AG04449 (cell line): ENCODE measurements at regions of chr17 and their contacts with region 1.

Region 1: DNA sequence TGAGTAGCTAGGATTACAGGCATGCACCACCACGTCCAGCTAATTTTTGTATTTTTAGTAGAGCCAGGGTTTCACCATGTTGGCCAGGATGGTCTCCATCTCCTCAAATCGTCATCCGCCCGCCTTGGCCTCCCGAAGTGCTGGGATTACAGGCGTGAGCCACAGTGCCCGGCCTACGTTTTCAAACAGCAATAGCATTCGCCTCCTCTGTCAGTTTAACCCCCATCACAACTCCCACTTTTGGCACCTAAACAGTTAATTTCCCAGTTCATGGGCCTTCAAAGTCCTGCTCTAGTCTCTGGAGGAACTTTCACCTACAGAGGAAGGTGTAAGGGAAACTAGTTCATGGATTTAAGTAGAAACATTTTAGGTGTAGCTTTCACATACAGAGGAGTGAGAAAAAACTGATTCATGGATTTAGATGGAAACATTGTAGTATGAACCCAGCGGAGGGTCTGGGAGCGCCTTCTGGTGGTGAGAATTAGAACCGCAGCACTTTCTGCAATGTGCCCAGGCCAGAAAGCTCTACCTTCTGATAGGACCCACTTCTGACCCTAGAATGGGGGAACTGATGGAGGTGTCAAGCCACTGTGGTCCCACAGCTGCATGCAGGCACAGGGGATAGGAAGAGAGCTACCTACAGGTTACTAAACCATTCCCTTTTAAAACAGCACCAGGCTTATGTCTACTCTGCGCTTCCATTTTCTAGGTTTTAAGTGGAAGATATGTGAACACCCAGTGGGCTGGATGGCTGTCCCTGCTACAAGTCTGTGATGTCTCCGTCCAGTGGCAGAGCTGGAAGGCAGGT is 12.0 kb upstream of the MEOX1 start:
- DNase-seq: no peak
- H3K4me3 ChIP-seq: no peak overlapping the region
- CTCF ChIP-seq: peak; percentile 85

Region 2: GRCh38 chr17:43530278-43531081 is 143.2 kb before region 1 on chr17:
- CTCF ChIA-PET with region 1: interaction called, 18 read pairs
- POLR2A ChIA-PET with region 1: no interaction called
- DNase-seq: no peak
- H3K4me3 ChIP-seq: peak overlapping the region; percentile 28
- CTCF ChIP-seq: no peak

Region 3: GRCh38 chr17:43556292-43556691 is 117.4 kb before region 1 on chr17:
- CTCF ChIA-PET with region 1: interaction called, 34 read pairs
- POLR2A ChIA-PET with region 1: no interaction called
- DNase-seq: no peak
- H3K4me3 ChIP-seq: no peak overlapping the region
- CTCF ChIP-seq: no peak

Region 4: DNA sequence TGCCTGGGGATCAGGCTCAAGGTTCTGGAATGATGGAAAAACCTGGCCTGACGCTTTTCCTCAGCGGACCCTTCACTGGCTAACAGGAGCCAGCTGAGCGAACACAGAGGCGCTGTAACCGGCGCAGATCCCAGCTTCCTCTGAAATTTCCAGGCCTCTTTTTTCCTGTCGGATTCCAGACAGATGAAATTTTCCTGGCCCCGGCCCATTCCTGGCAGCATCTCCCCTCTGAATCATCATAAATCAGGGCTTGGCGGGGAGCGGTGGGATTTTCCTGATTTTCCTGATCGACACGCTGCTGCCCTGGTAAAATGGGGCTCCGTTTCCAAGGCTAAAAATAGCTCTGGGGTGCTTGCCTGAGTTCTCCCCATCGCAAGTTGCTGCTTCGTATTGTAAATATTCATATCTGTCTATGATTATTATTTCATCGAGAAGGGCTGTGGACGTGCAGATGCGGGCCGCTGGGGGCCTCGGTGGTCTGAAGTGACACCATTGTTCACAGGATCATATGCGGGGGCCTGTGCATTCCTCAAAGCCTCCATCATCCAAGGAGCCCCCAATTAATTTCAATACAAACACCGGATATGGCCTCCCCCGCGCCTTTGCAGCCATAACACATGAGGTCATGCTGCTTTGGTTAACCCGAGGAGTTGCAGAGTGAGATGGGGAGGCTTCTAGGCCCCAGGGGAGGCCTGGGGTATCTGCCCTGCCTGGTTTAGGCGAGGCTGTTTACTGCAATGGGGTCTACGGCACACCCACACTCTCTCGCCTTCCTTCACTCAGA is 81.7 kb before region 1 on chr17:
- CTCF ChIA-PET with region 1: interaction called, 19 read pairs
- POLR2A ChIA-PET with region 1: interaction called, 3 read pairs
- DNase-seq: no peak
- H3K4me3 ChIP-seq: peak overlapping the region; percentile 10; the same call in 1 of the 2 replicates
- CTCF ChIP-seq: no peak

Region 5: DNA sequence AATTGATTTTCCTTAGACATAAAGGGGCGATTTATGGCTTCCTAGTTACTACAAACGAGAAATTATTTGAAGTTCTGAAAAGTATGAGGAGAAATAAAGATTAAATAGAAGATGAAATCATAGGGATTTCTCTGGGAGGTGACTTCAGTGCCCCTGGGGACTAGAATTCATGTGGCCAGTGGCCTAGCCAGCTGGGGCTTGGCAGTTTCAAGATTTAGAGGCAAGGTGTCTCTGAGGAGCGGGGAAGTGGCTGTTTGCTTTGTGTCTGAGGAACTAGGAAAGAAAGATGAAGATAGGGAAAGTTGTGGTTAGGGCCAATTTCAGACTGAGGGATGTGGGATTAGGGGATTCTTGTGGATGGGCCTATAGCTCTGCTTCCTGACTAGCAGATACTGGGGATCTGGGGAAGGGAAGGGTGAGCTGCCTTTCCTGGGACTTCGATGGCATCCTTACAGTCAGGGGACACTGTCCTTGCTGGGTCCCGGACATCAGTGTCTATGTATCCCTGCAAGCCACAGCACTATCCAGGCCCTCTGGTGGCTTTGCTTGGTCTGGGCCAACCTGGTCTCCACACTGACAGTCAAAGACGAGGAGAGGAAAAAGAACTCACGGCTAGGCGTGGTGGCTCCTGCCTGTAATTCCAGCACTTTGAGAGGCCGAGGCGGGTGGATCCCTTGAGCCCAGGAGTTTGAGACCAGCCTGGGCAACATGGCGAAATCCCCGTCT is 10.4 kb after region 1 on chr17:
- CTCF ChIA-PET with region 1: interaction called, 27 read pairs
- POLR2A ChIA-PET with region 1: no interaction called
- DNase-seq: no peak
- H3K4me3 ChIP-seq: no peak overlapping the region
- CTCF ChIP-seq: no peak

Region 6: GRCh38 chr17:43766413-43767052 is 92.8 kb after region 1 on chr17:
- CTCF ChIA-PET with region 1: interaction called, 16 read pairs
- POLR2A ChIA-PET with region 1: no interaction called
- DNase-seq: no peak
- H3K4me3 ChIP-seq: no peak overlapping the region
- CTCF ChIP-seq: peak; percentile 78